ENCODE measurements at regions of chr17 and their contacts with region 1.

Region 1: GRCh38 chr17:31900877-31901276 is 631 bp downstream of the UTP6 start:
- DNase-seq: no peak
- H3K4me3 ChIP-seq: peak overlapping the region; percentile 11 to 56 (median 49)
- H3K27ac ChIP-seq: peak overlapping the region in 1 of 3 donors; percentile 60
- H3K4me1 ChIP-seq: peaks cover 8 to 9% of the 10 kb centered on the region in 2 donors
- H3K27me3 ChIP-seq: no peaks in the 10 kb centered on the region
- CTCF ChIP-seq: no peak
- POLR2A ChIP-seq: no peak

Region 2: DNA sequence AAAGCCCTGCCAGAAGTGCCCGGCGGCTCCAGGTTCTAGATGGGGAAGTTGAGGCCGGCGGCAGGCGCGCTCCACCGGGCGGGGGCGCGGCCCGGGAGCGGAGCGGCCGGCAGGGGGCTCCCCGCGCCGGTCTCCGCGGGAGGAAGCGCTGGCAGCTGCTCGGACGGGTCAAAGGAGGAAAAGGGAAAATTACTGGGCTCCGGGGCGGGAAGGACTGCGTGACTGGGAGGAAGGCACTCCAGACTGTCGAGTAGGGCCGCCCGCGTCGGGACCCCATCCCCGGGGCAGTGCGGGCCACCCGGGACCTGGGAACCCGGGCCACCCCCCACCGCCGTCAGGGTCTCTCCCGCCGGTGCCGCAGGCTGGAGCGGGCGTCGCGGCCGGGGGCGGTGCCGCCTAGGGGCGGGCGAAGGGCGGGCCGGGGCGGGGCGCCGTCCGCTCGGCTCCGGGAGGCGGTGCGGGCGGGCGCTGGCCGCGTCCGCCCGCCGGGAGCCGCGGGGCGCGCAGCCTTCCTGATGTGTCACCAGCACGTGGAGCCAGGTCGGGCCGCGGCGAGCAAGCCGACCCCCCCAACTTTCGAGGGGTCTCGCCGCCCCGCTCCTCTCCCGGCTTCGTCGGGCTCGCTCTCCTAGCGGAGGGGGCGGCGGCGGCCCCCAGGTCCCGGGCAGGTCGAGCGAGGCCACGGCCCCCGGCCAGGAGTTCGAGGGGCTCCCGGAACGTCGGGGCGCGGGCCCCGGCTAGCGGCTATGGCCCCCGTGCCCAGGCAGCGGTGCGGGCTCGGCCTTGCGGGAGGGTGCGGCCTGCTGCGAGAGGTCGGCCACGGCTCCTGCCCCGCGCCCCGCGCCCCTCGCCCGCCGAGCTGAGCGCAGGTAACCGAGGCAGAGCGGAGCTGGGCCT is 341.9 kb before region 1 on chr17:
- intact Hi-C with region 1: loop called (anchors 5 kb)
- DNase-seq: peak; percentile 75 to 78
- H3K4me3 ChIP-seq: peak overlapping the region; percentile 38 to 66 (median 56)
- H3K27ac ChIP-seq: peak overlapping the region; percentile 44 to 83 (median 69)
- H3K4me1 ChIP-seq: peaks cover 16 to 34% of the 10 kb centered on the region in 2 donors
- H3K27me3 ChIP-seq: no peaks in the 10 kb centered on the region
- CTCF ChIP-seq: peak; percentile 12 to 94 (median 84)
- POLR2A ChIP-seq: peak; percentile 56 to 69

Region 3: DNA sequence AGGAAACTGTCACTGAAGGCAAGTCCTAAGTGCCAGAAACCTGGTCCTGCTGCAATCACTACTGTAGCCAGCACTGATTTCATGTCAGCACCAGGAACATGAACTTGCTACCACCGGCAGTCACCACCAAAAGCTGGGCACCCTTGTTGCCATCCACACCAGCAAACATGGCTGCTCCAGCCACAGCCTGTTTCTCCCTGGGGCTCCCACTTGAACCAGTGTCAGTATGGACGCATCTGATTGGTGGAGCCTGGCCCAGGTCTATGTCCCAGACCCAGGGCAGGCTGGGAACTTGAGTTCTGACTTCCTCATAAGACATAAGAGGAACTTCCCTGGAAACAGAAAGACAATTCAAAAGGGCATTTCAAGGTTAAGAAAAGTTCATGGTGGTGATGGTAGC is 98.4 kb before region 1 on chr17:
- intact Hi-C with region 1: no loop called
- DNase-seq: no peak
- H3K4me3 ChIP-seq: no peak overlapping the region
- H3K27ac ChIP-seq: no peak overlapping the region
- H3K4me1 ChIP-seq: peaks cover 0 to 10% of the 10 kb centered on the region in 2 donors
- H3K27me3 ChIP-seq: no peaks in the 10 kb centered on the region
- CTCF ChIP-seq: no peak
- POLR2A ChIP-seq: no peak

Region 4: DNA sequence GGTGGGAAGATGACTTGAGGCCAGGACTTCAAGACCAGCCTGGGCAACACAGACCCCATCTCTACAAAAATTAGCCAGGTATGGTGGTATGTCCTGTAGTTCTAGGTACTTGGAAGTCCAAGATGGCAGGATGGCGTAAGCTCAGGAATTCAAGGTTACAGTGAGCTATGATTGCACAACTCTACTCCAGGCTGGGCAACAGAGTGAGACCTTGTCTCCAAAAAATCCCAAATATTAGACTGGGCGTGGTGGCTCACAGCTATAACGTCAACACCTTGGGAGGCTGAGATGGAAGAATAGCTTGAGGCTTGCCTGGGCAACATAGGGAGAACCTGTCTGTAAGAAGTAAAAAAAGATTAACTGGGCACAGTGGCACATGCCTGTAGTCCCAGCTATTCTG is 66.8 kb after region 1 on chr17:
- intact Hi-C with region 1: no loop called
- DNase-seq: no peak
- H3K4me3 ChIP-seq: no peak overlapping the region
- H3K27ac ChIP-seq: no peak overlapping the region
- H3K4me1 ChIP-seq: no peaks in the 10 kb centered on the region
- H3K27me3 ChIP-seq: no peaks in the 10 kb centered on the region
- CTCF ChIP-seq: no peak
- POLR2A ChIP-seq: no peak

Region 5: DNA sequence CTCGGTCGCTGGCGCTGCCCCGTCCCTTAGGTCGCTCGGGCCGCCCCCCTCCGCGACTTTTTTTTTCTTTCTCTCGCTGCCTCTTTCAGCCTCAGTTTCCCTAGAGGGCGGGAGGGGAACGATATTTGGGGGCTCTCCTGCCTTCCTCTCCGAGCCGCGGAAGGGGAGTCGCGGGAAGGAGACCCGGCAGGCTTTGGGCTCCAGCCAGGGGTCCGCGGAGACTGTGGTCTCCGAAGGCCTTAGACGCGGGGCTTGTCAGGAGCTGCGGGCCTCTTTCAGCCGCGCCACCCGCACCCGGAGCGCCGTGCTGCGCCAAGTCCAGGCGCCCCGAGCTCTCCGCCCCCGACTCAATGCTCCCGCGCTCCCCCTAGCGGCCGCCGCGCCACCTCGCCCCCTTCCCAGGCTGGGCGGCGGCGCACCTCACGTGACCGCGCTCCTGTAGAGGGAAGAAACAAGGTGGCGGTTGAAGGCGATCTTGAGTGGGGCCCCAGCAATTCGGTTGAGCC is 106.1 kb after region 1 on chr17 and contains the start of gene LRRC37B:
- intact Hi-C with region 1: no loop called
- DNase-seq: peak; percentile 85 to 89
- H3K4me3 ChIP-seq: peak within 1 kb of the TSS; percentile 31 to 86 (median 83)
- H3K27ac ChIP-seq: peak within 1 kb of the TSS; percentile 45 to 76 (median 59)
- H3K4me1 ChIP-seq: peaks cover 0 to 11% of the 10 kb centered on the region in 2 donors
- H3K27me3 ChIP-seq: no peaks in the 10 kb centered on the region
- CTCF ChIP-seq: peak; percentile 50 to 99 (median 94)
- POLR2A ChIP-seq: peak in 1 of 2 donors; percentile 71
- total RNA-seq, gene LRRC37B: 10.3 to 26.8 (median 17.0) TPM